Right ventricle myocardium inferior (tissue), 1 donor: ENCODE measurements at regions of chr12 and their contacts with region 1.

Region 1: DNA sequence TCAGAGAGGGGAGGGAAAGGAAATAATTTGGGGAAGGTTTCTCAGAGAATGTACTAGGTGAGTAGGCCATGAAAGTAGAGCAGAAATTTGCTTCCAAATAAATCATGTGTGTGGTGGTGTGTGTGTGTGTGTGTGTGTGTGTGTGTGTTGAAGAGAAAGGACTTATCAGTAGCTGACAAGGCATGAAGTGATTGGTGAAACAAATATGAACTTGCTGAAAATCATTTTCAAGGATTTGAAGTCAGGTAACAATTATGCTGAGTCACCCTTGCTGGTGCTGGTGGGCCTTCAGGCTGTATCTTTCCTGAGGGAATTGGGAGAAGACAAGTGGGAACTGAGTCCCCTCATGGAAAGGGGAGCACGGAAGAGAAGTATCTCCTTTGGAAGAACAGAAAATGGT is 55.5 kb downstream of the HSD17B6 start:
- DNase-seq: no peak
- ATAC-seq: no peak

Region 2: DNA sequence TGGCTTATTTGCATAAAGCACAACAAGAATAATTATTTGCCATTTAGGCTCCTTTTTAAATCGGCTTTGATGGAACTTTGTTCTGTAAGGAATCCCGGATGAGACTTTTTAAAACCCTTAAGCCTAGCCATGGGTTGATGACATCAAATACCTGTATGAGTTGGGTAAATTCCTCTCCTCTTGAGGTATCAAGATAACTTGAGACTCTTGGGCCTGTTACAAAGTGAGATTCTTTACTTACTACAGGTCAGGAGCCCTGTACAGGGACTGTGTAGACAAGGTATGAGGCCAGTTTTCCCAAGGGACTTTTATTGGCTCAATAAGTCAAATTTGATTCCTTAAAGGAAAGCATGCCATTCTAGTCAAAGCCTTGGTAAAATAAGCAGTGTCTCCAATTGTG is 13.3 kb after region 1 on chr12:
- intact Hi-C with region 1: loop called (anchors 1 kb)
- DNase-seq: no peak
- ATAC-seq: no peak

Region 3: DNA sequence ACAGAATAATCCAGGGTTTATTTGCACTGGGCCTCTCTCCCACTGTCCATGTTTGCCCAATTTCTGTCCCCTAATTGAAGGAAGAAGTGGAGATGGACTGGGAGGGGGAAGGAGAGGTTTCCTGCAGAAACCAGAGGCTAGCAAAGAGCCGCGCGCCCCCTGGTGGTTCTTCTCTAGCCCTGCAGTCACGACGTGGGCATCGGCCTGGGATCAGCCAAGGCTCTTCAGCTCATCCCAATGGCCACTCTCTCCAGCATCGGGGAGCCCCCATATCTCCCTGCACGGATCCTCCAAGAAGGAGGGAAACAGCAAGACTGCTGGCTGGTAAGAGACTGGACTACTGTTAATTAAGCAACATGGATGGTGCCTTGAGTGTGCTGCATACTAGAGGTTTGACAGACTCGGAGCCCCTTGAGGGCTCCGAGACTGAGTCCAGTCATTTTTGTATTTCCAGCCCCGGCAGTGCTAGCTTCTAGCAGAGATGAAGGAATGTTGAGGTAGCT is 169.0 kb after region 1 on chr12:
- intact Hi-C with region 1: no loop called
- DNase-seq: peak; percentile 93
- ATAC-seq: peak; percentile 82